Activated naive CD8-positive, alpha-beta T cell treated with anti-CD3 and anti-CD28 coated beads, Interleukin-2, amount 10 ng/mL, durations not matched to agents 7 days and 5 days (primary cell): ENCODE measurements at regions of chr7 and their contacts with region 1.

Region 1: DNA sequence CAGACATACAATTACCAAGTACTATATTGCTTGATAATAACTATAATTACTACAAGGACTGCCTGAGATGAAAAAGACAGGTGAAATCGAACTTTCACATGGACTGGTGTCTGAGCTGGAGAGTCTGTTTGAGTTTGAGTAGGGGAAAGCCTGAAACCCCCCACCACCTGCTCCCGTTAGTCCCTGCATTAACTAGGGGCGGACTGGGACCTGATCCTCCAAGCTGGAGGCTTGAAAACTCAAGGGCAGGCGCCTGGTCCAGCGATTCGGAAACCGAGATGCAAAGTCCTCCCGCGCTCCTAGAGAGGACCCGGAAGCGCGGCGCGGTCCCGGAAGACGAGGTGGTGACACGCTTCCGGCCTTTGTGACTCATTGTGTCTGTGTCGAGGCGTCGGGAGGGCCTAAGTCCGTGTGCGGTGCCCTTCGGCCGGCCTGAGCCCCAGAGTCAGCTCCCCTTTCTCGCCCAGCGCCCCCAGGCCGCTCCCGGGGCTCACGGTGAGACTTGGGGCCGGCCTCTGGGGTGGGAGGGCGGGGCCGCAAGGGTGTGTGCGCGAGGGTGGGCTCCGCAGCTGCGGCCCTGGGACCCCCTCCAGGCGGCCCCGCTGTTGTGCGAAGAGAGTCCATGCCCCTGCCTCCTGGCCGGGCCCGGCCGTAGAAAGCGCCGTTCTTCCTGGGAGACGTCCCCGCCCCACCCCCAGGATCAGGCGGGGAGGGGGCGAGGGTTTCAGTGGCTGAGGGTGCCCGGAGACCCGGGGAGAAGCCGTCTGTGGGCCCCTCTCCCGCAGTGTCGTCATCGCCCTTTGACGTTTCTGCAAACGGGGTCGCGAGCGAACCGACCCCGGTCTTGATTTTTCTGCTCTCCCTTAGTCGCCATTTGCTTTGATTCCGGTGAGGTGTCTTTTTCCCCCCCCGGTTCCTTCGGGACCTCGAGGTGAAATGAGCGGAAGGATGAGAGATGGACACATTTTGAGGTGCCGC is at the start of gene ZKSCAN1:
- DNase-seq: peak; percentile 83
- ATAC-seq: peak; percentile 95
- H3K4me3 Mint-ChIP-seq: peak within 1 kb of the TSS; percentile 95
- H3K27ac Mint-ChIP-seq: peak within 1 kb of the TSS; percentile 93
- H3K4me1 Mint-ChIP-seq: peaks cover 31% of the 10 kb centered on the region
- H3K27me3 Mint-ChIP-seq: no peaks in the 10 kb centered on the region
- total RNA-seq, gene ZKSCAN1: 85.5 to 88.8 TPM

Region 2: GRCh38 chr7:99997545-99998137 is 17.9 kb before region 1 on chr7:
- POLR2A ChIA-PET with region 1: interaction called, 22 read pairs
- DNase-seq: peak; percentile 90
- ATAC-seq: peak; percentile 94
- H3K4me3 Mint-ChIP-seq: peak overlapping the region; percentile 68
- H3K27ac Mint-ChIP-seq: peak overlapping the region; percentile 83
- H3K4me1 Mint-ChIP-seq: peaks cover 14% of the 10 kb centered on the region
- H3K27me3 Mint-ChIP-seq: peaks cover 9% of the 10 kb centered on the region

Region 3: GRCh38 chr7:100081535-100082102 is 66.1 kb after region 1 on chr7 and contains the start of gene ZNF3:
- POLR2A ChIA-PET with region 1: interaction called, 16 read pairs
- DNase-seq: peak; percentile 96
- ATAC-seq: peak; percentile 90
- H3K4me3 Mint-ChIP-seq: peak within 1 kb of the TSS; percentile 86
- H3K27ac Mint-ChIP-seq: peak within 1 kb of the TSS; percentile 86
- H3K4me1 Mint-ChIP-seq: peaks cover 25% of the 10 kb centered on the region
- H3K27me3 Mint-ChIP-seq: peaks cover 10% of the 10 kb centered on the region
- total RNA-seq, gene ZNF3: 28.0 to 32.6 TPM

Region 4: GRCh38 chr7:100190048-100190711 is 174.7 kb after region 1 on chr7:
- POLR2A ChIA-PET with region 1: no interaction called
- DNase-seq: no peak
- ATAC-seq: peak; percentile 90
- H3K4me3 Mint-ChIP-seq: no peak overlapping the region
- H3K27ac Mint-ChIP-seq: peak overlapping the region; percentile 71
- H3K4me1 Mint-ChIP-seq: peaks cover 24% of the 10 kb centered on the region
- H3K27me3 Mint-ChIP-seq: no peaks in the 10 kb centered on the region